ENCODE measurements at regions of chr9 and their contacts with region 1.

Region 1: DNA sequence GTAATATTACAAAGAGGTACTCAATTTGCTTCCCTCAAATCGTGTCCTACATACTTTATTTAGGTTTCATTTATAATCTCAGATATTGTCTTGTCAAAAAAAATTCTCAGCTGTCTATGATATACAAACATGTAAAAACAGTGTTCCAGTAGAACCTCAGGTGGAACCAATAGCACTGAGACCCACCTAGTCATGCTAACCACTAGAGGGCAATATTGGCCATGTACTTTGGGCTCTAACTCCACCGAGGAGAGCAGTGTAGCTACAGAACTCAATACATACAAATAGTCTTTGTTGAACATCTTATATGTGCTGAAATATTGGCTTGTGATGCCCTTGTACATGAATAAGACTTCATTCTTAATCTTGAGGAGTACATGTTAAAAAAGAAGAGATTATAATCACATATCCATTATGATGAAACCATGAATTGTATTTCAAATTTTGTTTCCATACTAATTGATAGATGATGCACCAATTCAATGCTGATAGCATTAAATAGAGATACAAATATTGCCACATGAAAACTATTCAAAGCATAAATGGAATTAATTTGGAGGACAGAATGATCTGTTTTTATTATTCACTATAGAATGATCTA is 71.2 kb upstream of the CNTLN start:
- H3K4me3 ChIP-seq: no peak overlapping the region
- H3K27ac ChIP-seq: no peak overlapping the region
- H3K4me1 ChIP-seq: no peaks in the 10 kb centered on the region
- CTCF ChIP-seq: no peak; the same call in 1 of the 2 replicates

Region 2: DNA sequence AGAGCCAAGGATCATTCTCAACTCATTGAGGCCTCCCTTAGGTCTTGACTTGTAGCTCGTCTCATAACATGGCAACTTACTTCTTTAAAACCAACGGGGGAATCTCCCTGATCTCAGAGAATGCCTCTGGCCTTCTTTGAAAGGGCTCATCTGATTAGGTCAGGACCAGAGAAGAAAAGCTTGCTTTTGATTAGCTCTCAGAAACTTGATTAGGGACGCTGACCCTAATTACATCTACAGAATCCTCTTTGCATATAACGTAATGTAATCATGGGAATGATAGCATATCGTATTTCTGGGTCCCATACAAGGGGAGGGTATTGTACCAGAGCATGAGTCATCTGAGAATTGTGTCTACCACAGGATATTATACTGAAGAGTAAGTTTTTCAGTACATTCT is 390.1 kb after region 1 on chr9:
- CTCF ChIA-PET with region 1: interaction called, 20 read pairs
- POLR2A ChIA-PET with region 1: no interaction called
- H3K4me3 ChIP-seq: no peak overlapping the region
- H3K27ac ChIP-seq: no peak overlapping the region
- H3K4me1 ChIP-seq: no peaks in the 10 kb centered on the region
- CTCF ChIP-seq: no peak